Motor neuron (in vitro differentiated cells): ENCODE measurements at regions of chr6 and their contacts with region 1.

Region 1: GRCh38 chr6:137707590-137708360 is 159.3 kb upstream of the TNFAIP3 start:
- ATAC-seq: peak; percentile 29 to 57 (median 44)
- H3K4me3 ChIP-seq: no peak overlapping the region
- H3K27ac ChIP-seq: no peak overlapping the region
- H3K4me1 ChIP-seq: no peaks in the 10 kb centered on the region

Region 2: DNA sequence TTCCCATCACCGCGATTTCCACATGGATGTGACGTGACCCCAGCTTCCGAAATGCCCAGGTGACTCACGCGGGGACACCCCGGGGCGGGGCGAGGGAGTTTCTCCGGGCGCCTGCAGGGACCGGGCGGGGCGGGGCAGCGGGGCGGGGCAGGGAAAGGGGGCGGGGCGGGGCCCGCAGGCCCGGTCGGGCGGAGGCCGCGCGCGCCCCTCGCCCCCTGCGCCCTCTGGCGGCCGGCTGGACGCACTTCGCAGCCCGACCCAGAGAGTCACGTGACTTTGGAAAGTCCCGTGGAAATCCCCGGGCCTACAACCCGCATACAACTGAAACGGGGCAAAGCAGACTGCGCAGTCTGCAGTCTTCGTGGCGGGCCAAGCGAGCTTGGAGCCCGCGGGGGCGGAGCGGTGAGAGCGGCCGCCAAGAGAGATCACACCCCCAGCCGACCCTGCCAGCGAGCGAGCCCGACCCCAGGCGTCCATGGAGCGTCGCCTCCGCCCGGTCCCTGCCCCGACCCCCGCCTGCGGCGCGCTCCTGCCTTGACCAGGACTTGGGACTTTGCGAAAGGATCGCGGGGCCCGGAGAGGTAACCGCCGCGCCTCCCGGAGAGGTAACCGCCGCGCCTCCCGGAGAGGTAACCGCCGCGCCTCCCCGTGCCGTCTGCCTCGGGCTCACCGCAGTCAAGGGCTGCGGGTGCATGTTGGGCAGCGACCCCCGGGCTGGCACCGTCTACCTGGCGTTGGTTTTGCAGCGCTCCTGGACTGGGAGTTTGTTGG is 159.3 kb after region 1 on chr6 and contains the start of gene TNFAIP3:
- in situ Hi-C with region 1: loop called in 5 of 9 experiments (anchors 5 to 25 kb)
- ATAC-seq: peak; percentile 83 to 95 (median 86)
- H3K4me3 ChIP-seq: peak within 1 kb of the TSS; percentile 67 to 89 (median 72)
- H3K27ac ChIP-seq: peak within 1 kb of the TSS in 1 of 2 donors; percentile 40
- H3K4me1 ChIP-seq: peaks cover 21 to 28% of the 10 kb centered on the region in 2 donors
- total RNA-seq, gene TNFAIP3: 2.2 to 10.0 (median 3.9) TPM

Region 3: GRCh38 chr6:137944793-137945498 is 237.2 kb after region 1 on chr6:
- in situ Hi-C with region 1: loop called in 6 of 9 experiments (anchors 25 kb)
- ATAC-seq: peak in 6 of 8 experiments; percentile 47 to 90 (median 60)
- H3K4me3 ChIP-seq: no peak overlapping the region
- H3K27ac ChIP-seq: no peak overlapping the region
- H3K4me1 ChIP-seq: no peaks in the 10 kb centered on the region

Region 4: DNA sequence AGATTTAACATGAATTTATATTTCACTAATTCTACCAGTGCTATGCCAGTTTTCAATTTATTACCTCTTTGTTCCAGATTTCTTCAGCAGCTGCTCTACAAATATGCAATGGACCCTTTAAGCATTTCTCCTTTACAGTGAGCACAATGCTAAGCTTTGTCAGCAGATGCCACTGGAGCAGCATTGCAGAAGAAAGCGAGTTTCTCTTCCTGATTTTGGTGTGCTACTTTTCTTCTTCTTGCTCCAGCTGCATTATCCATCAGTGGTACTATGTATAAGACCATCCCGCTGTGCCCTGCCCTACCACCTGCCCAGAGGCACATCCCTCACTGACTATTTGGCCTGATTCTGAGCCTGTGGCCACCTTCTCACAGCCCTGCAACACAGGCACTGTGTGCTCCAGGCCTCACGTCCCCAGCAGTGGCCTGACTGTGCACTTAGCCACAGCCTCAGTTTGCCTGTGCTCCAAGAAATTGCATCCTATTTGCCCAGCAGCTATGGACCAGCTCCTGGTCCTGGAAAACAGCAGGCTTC is 243.4 kb after region 1 on chr6:
- in situ Hi-C with region 1: loop called in 6 of 9 experiments (anchors 25 kb)
- ATAC-seq: no peak
- H3K4me3 ChIP-seq: no peak overlapping the region
- H3K27ac ChIP-seq: no peak overlapping the region
- H3K4me1 ChIP-seq: no peaks in the 10 kb centered on the region

Region 5: GRCh38 chr6:137975188-137975940 is 267.6 kb after region 1 on chr6:
- in situ Hi-C with region 1: loop called in 3 of 9 experiments (anchors 25 kb)
- ATAC-seq: peak in 3 of 8 experiments; percentile 26 to 45 (median 31)
- H3K4me3 ChIP-seq: no peak overlapping the region
- H3K27ac ChIP-seq: no peak overlapping the region
- H3K4me1 ChIP-seq: no peaks in the 10 kb centered on the region

Region 6: DNA sequence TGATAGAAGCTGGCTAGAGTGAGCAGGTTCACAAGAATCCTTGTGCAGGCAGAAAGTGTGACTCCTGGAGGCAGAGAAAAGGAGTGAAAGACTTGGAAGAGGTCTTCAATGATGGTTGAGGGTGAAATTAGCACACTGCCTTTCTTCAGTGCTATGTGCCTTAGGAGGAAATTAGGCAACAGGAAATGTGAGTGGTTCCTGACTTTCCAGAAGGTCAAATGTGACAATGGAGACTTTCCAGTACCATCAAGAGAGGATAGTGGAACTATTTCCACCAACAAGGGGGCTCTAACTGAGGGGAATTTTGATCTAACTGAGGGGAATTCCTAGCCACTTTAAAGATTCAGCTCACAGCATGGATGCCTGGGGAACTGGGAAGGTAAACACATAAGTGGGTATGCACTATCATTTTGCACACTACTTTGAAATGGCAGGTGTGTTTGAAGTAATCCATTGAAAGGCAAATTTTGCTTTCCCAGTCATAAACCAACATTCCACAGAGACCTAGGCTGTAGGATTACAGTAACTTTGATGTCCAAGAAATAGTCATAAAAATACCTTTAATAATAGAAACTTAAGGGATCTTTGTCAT is 309.5 kb after region 1 on chr6:
- in situ Hi-C with region 1: no loop called
- ATAC-seq: no peak
- H3K4me3 ChIP-seq: no peak overlapping the region
- H3K27ac ChIP-seq: no peak overlapping the region
- H3K4me1 ChIP-seq: no peaks in the 10 kb centered on the region